AG04450 (cell line): ENCODE measurements at regions of chr3 and their contacts with region 1.

Region 1: GRCh38 chr3:171526869-171527268 is 66.7 kb upstream of the TNIK start:
- DNase-seq: peak; percentile 70
- H3K4me3 ChIP-seq: no peak overlapping the region
- H3K27ac ChIP-seq: no peak overlapping the region
- H3K27me3 ChIP-seq: no peaks in the 10 kb centered on the region
- CTCF ChIP-seq: peak; percentile 27

Region 2: DNA sequence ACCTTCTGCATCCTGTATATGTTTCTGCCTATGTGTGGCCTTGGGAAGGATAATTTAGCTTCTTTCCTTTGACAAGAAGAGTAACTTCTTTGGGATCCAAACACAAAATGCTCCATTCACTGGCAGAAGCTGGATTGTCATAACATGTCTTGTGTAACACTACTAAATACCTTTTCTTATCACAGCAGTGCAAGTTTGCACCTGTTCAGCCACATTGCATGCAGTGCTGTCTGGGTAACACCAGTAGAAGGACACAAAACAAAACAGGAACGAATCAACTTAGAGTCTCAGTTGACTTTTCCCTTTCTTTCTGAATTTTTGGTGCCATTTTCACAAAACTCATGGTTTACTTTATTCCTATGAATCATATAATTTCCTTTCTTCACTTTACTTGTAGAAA is 23.1 kb before region 1 on chr3:
- CTCF ChIA-PET with region 1: no interaction called
- POLR2A ChIA-PET with region 1: no interaction called
- DNase-seq: no peak
- H3K4me3 ChIP-seq: no peak overlapping the region
- H3K27ac ChIP-seq: no peak overlapping the region
- H3K27me3 ChIP-seq: peaks cover 5% of the 10 kb centered on the region
- CTCF ChIP-seq: no peak

Region 3: GRCh38 chr3:171542976-171543375 is 16.1 kb after region 1 on chr3:
- CTCF ChIA-PET with region 1: interaction called, 10 read pairs
- POLR2A ChIA-PET with region 1: no interaction called
- DNase-seq: no peak
- H3K4me3 ChIP-seq: no peak overlapping the region
- H3K27ac ChIP-seq: no peak overlapping the region
- H3K27me3 ChIP-seq: no peaks in the 10 kb centered on the region
- CTCF ChIP-seq: no peak